Endothelial cell of umbilical vein (primary cell): ENCODE measurements at regions of chr14 and their contacts with region 1.

Region 1: DNA sequence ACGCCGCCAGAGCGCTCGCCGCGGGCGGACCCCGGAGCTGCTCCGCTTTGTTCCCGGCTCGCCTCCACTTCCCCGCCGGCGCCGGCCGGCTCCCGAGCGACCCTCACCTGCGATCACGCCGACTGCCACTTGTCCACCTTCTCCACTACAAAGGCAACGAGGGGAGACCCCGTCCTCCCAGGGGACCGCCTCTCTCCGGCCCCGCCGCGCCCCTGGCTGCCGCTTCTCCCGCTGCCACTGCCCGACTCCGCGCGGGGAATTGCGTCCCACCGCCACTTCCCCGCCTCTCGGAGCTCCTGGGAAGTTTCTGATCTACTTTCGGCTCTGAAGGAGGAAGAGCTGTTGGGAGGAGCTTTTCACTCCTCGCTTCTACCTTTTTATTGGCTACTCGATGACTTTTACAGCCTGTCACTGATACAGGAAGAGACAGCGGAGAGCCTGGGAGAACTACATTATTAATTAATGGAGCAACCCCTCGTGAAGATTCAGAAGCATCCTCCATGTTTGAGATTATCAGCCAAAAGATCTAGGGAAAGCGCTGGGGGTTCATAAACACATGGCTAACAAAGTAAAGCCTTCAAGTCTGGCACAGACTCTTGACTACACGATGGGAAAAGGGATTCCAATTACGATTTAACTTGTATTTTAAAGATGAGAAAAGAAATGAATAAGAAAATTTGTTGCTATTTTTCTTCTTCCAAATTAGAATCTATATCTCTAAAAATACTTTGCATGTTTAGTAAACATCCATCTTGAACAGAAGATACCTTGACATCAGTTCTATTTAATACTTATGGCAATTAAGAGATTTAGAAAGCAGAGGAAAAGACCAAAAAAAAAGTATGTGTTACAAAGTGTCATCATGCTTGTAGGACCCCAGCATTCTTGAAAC is at the start of gene BAZ1A:
- DNase-seq: peak; percentile 90
- H3K4me3 ChIP-seq: peak within 1 kb of the TSS; percentile 78 to 85 (median 80)
- H3K27ac ChIP-seq: peak within 1 kb of the TSS; percentile 84
- H3K4me1 ChIP-seq: peaks cover 14% of the 10 kb centered on the region
- H3K27me3 ChIP-seq: no peaks in the 10 kb centered on the region
- CTCF ChIP-seq: no peak
- POLR2A ChIP-seq: peak; percentile 95
- total RNA-seq, gene BAZ1A: 49.1 and 52.1 TPM in 2 replicates

Region 2: DNA sequence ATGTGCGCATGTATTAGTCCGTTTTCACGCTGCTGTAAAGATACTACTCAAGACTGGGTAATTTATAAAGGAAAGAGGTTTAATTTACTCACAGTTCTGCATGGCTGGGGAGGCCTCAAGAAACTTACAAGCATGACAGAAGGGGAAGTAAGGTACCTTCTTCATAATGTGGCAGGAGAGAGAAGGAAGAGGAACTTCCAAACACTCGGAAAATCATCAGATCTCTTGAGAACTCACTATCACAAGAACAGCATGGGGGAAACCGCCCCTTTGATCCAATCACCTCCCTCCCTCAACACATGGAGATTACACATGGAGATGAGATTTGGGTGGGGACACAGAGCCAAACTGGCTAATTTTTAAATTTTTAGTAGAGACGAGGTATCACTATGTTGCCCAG is 203.6 kb before region 1 on chr14:
- CTCF ChIA-PET with region 1: interaction called, 5 read pairs
- POLR2A ChIA-PET with region 1: no interaction called
- dilution Hi-C with region 1: no loop called
- intact Hi-C with region 1: loop called (anchors 2 kb)
- DNase-seq: no peak
- H3K4me3 ChIP-seq: no peak overlapping the region
- H3K27ac ChIP-seq: no peak overlapping the region
- H3K4me1 ChIP-seq: peaks cover under 1% of the 10 kb centered on the region
- H3K27me3 ChIP-seq: no peaks in the 10 kb centered on the region
- CTCF ChIP-seq: no peak
- POLR2A ChIP-seq: no peak

Region 3: DNA sequence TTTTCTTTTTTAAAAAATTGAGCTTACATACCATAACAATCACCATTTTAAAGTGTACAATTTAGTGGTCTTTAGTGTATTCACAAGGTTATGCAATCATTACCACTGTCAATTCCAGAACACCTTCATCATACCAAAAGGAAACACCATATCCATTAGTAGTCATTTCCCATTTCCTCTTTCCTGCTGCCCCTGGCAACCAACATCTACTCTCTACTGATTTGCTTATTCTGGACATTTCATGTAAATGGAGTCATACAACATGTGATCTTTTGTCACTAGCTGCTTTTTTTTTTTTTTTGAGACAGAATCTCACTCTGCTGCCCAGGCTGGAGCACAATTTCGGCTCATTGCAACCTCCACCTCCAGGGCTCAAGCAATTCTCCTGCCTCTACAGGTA is 94.0 kb before region 1 on chr14:
- CTCF ChIA-PET with region 1: no interaction called
- POLR2A ChIA-PET with region 1: interaction called, 3 read pairs
- dilution Hi-C with region 1: no loop called
- intact Hi-C with region 1: loop called (anchors 1 kb)
- DNase-seq: peak; percentile 95
- H3K4me3 ChIP-seq: peak overlapping the region in 1 of 3 experiments; percentile 40
- H3K27ac ChIP-seq: peak overlapping the region; percentile 95
- H3K4me1 ChIP-seq: peaks cover 22% of the 10 kb centered on the region
- H3K27me3 ChIP-seq: no peaks in the 10 kb centered on the region
- CTCF ChIP-seq: no peak
- POLR2A ChIP-seq: peak; percentile 34

Region 4: DNA sequence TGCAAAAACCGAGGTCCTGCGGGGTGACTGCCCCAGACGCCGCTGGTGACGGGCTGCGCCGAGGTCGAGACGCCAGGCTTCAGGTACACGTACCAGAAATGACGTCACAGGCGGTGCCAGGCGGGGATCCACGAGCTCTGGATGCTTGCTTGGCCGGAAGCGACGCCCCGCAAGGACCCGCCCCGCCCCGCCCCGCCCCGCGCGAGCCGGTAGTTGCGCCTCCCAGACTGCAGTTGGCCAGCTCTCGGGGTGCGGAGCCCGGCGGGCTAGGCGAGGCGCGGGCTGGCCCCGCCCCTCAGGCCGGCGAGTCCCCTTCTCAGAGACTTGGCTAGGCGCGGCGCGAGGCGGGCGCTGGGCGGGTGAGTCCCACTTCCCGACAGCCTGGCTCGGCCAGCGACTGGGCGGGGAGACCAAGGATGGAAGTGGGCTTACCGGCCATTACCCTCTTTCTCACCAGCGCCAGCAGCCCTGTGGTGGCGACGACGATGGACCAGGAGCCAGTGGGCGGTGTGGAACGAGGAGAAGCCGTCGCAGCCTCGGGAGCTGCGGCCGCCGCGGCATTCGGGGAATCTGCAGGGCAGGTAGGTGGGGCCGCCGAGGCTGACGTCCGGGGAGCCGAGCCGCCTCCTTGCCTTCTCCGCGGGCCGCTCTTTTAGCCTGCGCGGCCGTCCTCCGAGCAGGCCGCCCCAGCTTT is 170.9 kb after region 1 on chr14 and contains the start of gene FAM177A1:
- CTCF ChIA-PET with region 1: no interaction called
- POLR2A ChIA-PET with region 1: interaction called, 10 read pairs
- dilution Hi-C with region 1: no loop called
- intact Hi-C with region 1: loop called (anchors 2 kb)
- DNase-seq: peak; percentile 98
- H3K4me3 ChIP-seq: peak within 1 kb of the TSS; percentile 69 to 91 (median 74)
- H3K27ac ChIP-seq: peak within 1 kb of the TSS; percentile 94
- H3K4me1 ChIP-seq: peaks cover 21% of the 10 kb centered on the region
- H3K27me3 ChIP-seq: no peaks in the 10 kb centered on the region
- CTCF ChIP-seq: peak in 1 of 2 donors; percentile 3
- POLR2A ChIP-seq: peak; percentile 61
- total RNA-seq, gene FAM177A1: 48.2 and 64.1 TPM in 2 replicates

Region 5: DNA sequence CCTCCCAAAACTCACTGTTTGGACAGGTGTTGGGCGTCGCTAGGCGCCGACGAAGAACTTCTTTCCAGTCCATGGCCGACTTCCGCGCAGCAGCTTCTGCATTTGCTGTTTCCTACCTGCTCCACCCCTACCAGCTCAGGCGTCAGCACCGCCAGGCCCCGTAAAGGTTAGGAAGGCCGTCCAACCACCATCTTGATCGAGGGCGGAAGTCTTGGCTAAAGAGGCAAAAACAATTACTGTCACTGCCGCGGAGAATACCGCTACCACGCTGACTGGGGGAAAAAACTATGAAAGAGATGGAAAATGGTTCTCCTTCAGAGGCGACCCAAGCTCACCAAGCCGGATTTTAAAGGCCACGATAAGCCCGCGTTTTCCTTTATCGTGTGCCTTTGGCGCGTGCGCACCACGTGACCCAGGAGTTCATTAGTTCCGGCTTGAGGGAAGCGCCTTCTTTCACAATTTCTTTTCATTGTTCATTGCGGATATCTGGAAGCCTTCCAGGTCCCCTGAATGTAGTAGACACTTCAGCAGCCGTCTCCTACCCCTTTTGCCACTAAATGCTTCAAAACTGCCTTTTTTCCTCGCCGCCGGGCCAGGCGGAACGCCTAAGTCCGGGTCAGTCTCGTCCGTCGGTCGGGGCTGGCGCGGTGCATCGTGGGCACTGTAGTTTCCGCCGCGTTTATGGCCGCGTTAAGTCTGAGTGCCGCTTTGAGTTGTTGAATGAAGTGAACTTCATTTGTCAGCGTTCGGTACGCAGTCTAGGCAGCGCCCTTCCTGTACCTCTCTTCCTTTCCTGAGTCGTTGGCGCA is 246.8 kb after region 1 on chr14 and contains the starts of genes PPP2R3C and PRORP:
- CTCF ChIA-PET with region 1: no interaction called
- POLR2A ChIA-PET with region 1: interaction called, 4 read pairs
- dilution Hi-C with region 1: no loop called
- intact Hi-C with region 1: loop called (anchors 2 kb)
- DNase-seq: peak; percentile 95
- H3K4me3 ChIP-seq: peak within 1 kb of the TSS; percentile 81 to 96 (median 88)
- H3K27ac ChIP-seq: peak within 1 kb of the TSS; percentile 91
- H3K4me1 ChIP-seq: peaks cover 15% of the 10 kb centered on the region
- H3K27me3 ChIP-seq: no peaks in the 10 kb centered on the region
- CTCF ChIP-seq: no peak
- POLR2A ChIP-seq: no peak
- total RNA-seq, gene PPP2R3C: 40.6 and 46.0 TPM in 2 replicates
- total RNA-seq, gene PRORP: 36.3 and 36.9 TPM in 2 replicates